ENCODE measurements at regions of chr3 and their contacts with region 1.

Region 1: DNA sequence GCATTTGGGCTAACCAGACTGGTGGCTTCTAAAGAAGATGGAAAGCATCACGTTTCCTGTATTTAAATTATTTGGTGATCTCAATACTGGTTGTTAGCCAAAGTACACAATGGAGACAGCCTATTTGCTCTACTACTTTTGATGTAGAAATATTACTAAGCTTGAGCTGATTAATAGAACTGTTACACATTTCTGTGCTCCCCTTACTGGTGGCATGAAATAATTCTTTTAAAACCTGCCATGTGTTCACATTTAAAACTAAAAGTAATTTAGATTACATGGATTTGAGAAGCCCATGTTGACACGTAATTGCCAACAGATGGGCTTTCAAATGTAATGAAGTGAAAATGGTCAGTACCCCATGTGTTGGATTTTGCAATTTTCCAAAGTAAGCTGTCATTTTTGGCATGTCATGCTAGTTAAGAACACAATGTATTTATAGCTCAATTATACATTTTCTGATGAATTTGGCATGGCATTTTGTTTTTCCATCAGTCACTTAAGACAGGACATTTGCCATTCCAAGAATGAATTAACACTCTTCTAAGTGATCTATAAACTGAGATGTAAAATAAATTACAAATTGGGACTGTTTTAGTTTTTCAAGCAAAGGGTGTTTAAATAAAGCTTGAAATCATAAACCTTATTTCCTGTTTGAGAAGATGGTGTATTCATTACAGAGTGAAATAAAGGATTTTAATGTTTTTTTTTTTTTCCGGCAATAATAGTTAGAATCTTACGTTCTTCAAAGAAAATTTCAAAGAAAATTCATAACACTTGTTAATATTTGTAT is 10.8 kb upstream of the RARRES1 start:
- DNase-seq: no peak
- ATAC-seq: no peak
- H3K4me3 ChIP-seq: no peak overlapping the region
- H3K27ac ChIP-seq: peak overlapping the region; percentile 87
- H3K4me1 ChIP-seq: peaks cover 40 to 69% of the 10 kb centered on the region in 2 experiments; a peak in 4 of 5 replicates
- H3K27me3 ChIP-seq: no peaks in the 10 kb centered on the region
- CTCF ChIP-seq: no peak
- EP300 ChIP-seq: no peak
- POLR2A ChIP-seq: no peak
- RAD21 ChIP-seq: no peak

Region 2: DNA sequence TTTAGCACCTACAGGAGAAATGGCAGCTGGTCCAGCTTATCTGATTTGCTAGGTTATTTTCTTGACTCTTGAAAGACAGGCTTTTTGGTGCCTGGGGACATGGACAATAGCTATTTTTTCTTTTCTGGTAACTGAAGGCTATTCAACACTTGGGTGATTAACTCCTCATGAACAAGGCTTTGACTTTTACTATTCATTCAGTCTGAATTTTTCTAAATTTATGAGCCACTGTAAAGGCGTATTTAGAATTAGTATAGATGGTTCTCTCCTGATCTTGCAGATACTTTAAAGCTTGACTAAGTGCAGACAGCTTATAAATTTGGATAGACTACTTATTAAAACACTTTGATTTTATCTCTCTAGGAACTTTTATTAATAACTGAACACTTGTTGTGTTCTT is 117.2 kb before region 1 on chr3:
- CTCF ChIA-PET with region 1: no interaction called
- POLR2A ChIA-PET with region 1: no interaction called
- in situ Hi-C with region 1: no loop called
- intact Hi-C with region 1: no loop called
- DNase-seq: no peak
- ATAC-seq: no peak
- H3K4me3 ChIP-seq: no peak overlapping the region
- H3K27ac ChIP-seq: no peak overlapping the region
- H3K4me1 ChIP-seq: peaks cover 0 to 3% of the 10 kb centered on the region in 2 experiments; a peak in 1 of 5 replicates
- H3K27me3 ChIP-seq: no peaks in the 10 kb centered on the region
- CTCF ChIP-seq: no peak
- EP300 ChIP-seq: no peak
- POLR2A ChIP-seq: no peak
- RAD21 ChIP-seq: no peak

Region 3: GRCh38 chr3:158768361-158768787 is 25.3 kb after region 1 on chr3:
- CTCF ChIA-PET with region 1: interaction called, 3 read pairs
- POLR2A ChIA-PET with region 1: interaction called, 3 read pairs
- in situ Hi-C with region 1: no loop called
- intact Hi-C with region 1: loop called (anchors 2 kb)
- DNase-seq: peak; percentile 28 to 53 (median 38)
- ATAC-seq: peak; percentile 78
- H3K4me3 ChIP-seq: no peak overlapping the region
- H3K27ac ChIP-seq: no peak overlapping the region; the same call in 2 of the 3 replicates
- H3K4me1 ChIP-seq: peaks cover 13 to 43% of the 10 kb centered on the region in 2 experiments; a peak in 3 of 5 replicates
- H3K27me3 ChIP-seq: no peaks in the 10 kb centered on the region
- CTCF ChIP-seq: no peak
- EP300 ChIP-seq: no peak
- POLR2A ChIP-seq: no peak
- RAD21 ChIP-seq: no peak

Measured in K562 (cell line).